ENCODE measurements at regions of chr14 and their contacts with region 1.

Region 1: GRCh38 chr14:51780006-51780692 is 80.3 kb upstream of the GNG2 start:
- DNase-seq: peak; percentile 80
- H3K4me3 ChIP-seq: peak overlapping the region; percentile 33 to 52; a peak in 3 of 4 replicates
- H3K27ac ChIP-seq: no peak overlapping the region; a peak in 1 of 4 replicates
- H3K4me1 ChIP-seq: peaks cover 0 to 7% of the 10 kb centered on the region in 2 experiments; a peak in 2 of 4 replicates
- H3K27me3 ChIP-seq: no peaks in the 10 kb centered on the region
- CTCF ChIP-seq: peak; percentile 87
- EP300 ChIP-seq: no peak
- RAD21 ChIP-seq: peak; percentile 86

Region 2: DNA sequence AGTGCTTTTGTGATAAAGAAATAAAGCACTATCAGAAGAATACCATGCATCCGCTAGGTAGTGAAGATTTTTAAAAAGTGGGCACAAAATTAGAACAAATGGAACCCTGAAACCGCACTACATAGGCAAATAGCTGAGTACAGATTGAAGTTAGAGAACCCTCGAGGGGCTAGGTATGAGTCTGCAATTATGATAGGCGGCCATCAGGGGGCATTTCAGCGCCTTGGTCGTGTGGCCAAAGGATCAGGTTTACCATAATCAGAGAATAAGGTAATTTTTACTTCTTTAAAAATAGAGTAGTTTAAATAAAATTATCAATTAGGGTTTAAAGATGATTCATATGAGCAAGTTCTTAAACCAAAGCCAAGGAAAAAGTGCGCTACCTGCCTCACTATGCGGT is 410.3 kb before region 1 on chr14:
- CTCF ChIA-PET with region 1: interaction called, 10 read pairs
- POLR2A ChIA-PET with region 1: no interaction called
- DNase-seq: no peak
- H3K4me3 ChIP-seq: no peak overlapping the region; a peak in 1 of 4 replicates
- H3K27ac ChIP-seq: no peak overlapping the region
- H3K4me1 ChIP-seq: peaks cover 0 to 2% of the 10 kb centered on the region in 2 experiments; a peak in 3 of 4 replicates
- H3K27me3 ChIP-seq: no peaks in the 10 kb centered on the region
- CTCF ChIP-seq: peak; percentile 36
- EP300 ChIP-seq: no peak
- RAD21 ChIP-seq: peak; percentile 55

Region 3: GRCh38 chr14:51472881-51473280 is 307.3 kb before region 1 on chr14:
- CTCF ChIA-PET with region 1: interaction called, 17 read pairs
- POLR2A ChIA-PET with region 1: no interaction called
- DNase-seq: peak; percentile 68
- H3K4me3 ChIP-seq: no peak overlapping the region
- H3K27ac ChIP-seq: peak overlapping the region; percentile 98
- H3K4me1 ChIP-seq: peaks cover 16 to 24% of the 10 kb centered on the region in 2 experiments
- H3K27me3 ChIP-seq: no peaks in the 10 kb centered on the region
- CTCF ChIP-seq: no peak
- EP300 ChIP-seq: peak; percentile 12 to 78; a peak in 2 of 4 replicates
- RAD21 ChIP-seq: peak; percentile 44

Region 4: GRCh38 chr14:51651388-51652167 is 128.6 kb before region 1 on chr14 and contains the start of gene FRMD6:
- CTCF ChIA-PET with region 1: interaction called, 79 read pairs
- POLR2A ChIA-PET with region 1: interaction called, 3 read pairs
- DNase-seq: peak; percentile 97
- H3K4me3 ChIP-seq: peak within 1 kb of the TSS; percentile 93 to 95
- H3K27ac ChIP-seq: peak within 1 kb of the TSS; percentile 96 to 97
- H3K4me1 ChIP-seq: peaks cover 0 to 23% of the 10 kb centered on the region in 2 experiments; a peak in 2 of 4 replicates
- H3K27me3 ChIP-seq: no peaks in the 10 kb centered on the region
- CTCF ChIP-seq: peak; percentile 79
- EP300 ChIP-seq: peak in 1 of 2 experiments; percentile 49; a peak in 2 of 4 replicates
- RAD21 ChIP-seq: peak; percentile 38
- polyA plus RNA-seq, gene FRMD6: 147 and 169 TPM in 2 replicates

Region 5: GRCh38 chr14:51792819-51793218 is 12.7 kb after region 1 on chr14:
- CTCF ChIA-PET with region 1: interaction called, 17 read pairs
- POLR2A ChIA-PET with region 1: no interaction called
- DNase-seq: no peak
- H3K4me3 ChIP-seq: no peak overlapping the region
- H3K27ac ChIP-seq: no peak overlapping the region
- H3K4me1 ChIP-seq: no peaks in the 10 kb centered on the region
- H3K27me3 ChIP-seq: no peaks in the 10 kb centered on the region
- CTCF ChIP-seq: no peak
- EP300 ChIP-seq: no peak
- RAD21 ChIP-seq: no peak

Region 6: GRCh38 chr14:51860164-51860824 is 80.1 kb after region 1 on chr14 and contains the start of gene GNG2:
- CTCF ChIA-PET with region 1: interaction called, 18 read pairs
- POLR2A ChIA-PET with region 1: no interaction called
- DNase-seq: peak; percentile 75
- H3K4me3 ChIP-seq: peak within 1 kb of the TSS; percentile 70 to 82
- H3K27ac ChIP-seq: peak within 1 kb of the TSS; percentile 75 to 92
- H3K4me1 ChIP-seq: peaks cover 20 to 22% of the 10 kb centered on the region in 2 experiments
- H3K27me3 ChIP-seq: no peaks in the 10 kb centered on the region
- CTCF ChIP-seq: no peak
- EP300 ChIP-seq: peak in 1 of 2 experiments; percentile 22; a peak in 2 of 4 replicates
- RAD21 ChIP-seq: no peak; the same call in 1 of the 2 replicates
- polyA plus RNA-seq, gene GNG2: 17.8 and 19.1 TPM in 2 replicates